ENCODE measurements at regions of chr19 and their contacts with region 1.

Region 1: DNA sequence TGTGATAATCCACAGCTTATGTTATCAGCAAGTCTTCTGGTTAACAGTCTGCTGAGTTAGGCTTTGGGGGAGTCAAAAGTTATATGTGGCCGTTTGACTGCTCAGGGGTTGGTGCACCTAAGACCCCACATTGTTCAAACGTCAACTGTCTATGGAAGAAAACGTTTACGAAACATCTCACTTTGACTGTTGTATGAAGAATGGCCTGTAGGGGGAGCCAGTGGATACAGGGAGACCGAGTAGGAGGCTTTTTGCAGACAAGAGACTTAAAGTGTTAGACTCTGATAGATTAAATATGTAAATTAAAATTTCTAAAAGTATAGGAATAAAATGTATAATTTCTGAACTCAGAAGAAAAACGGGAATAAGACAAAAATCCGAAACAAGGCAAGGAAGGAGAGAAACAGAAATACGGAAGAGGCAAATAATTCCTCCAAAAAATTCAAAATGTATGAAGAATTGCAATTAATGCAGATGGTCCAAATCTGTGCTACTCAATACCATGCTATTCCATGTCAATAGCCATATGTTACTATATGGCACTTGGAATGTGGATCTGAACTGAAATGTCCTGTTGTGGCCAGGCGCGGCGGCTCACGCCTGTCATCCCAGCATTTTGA is 37.8 kb downstream of the TNFSF14 start:
- DNase-seq: peak; percentile 25
- ATAC-seq: peak; percentile 81
- H3K4me3 Mint-ChIP-seq: no peak overlapping the region
- H3K27ac Mint-ChIP-seq: peak overlapping the region; percentile 26
- H3K4me1 Mint-ChIP-seq: peaks cover 29% of the 10 kb centered on the region
- H3K27me3 Mint-ChIP-seq: peaks cover 2% of the 10 kb centered on the region
- CTCF ChIP-seq: peak; percentile 65

Region 2: DNA sequence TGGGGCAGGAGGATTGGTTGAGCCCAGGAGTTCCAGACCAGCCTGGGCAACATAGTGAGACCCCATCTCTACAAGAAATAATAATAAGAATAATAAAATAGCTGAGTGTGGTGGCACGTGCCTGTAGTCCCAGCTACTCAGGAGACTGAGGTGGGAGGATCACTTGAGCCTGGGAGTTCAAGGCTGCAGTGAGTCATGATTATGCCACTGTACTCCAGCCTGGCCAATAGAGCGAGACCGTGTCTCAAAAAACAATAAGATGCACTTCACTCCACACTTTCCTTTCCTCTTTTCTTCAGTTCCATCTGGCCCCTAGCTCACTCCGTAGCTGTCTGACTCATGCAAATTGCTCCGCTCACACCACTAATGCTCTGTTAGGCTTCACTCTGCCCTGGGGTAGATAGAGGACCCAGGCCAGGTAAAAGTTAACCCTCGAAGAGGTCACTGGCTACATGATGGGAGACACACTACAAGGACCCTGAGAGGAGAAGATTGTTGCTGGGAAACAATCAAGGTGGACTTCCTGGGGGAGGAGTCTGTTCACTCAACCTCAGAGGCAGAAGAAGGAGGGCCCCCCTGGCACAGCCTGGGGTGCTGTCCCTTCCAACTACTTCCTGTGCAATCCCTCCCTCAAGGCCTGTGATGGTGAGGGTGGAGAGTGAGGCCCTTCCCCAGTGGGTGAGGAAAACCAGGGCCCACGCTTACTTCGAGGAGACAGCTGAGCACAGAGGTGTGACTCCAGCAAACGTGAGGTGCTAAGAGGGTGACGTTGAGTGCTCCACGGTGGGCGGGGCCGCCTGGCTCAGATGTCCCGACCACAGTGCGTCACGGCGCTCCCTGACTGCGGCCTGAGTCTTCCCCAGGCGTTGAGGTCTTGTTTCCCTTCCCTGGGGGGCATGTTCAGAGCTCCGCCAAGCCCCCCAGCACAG is 110.1 kb before region 1 on chr19:
- CTCF ChIA-PET with region 1: interaction called, 72 read pairs
- POLR2A ChIA-PET with region 1: interaction called, 24 read pairs
- intact Hi-C with region 1: loop called (anchors 1 kb)
- DNase-seq: peak; percentile 70
- ATAC-seq: peak; percentile 73
- H3K4me3 Mint-ChIP-seq: peak overlapping the region; percentile 75
- H3K27ac Mint-ChIP-seq: peak overlapping the region; percentile 99
- H3K4me1 Mint-ChIP-seq: peaks cover 55% of the 10 kb centered on the region
- H3K27me3 Mint-ChIP-seq: no peaks in the 10 kb centered on the region
- CTCF ChIP-seq: no peak

Region 3: GRCh38 chr19:6590827-6591319 is 41.2 kb before region 1 on chr19 and contains the start of gene CD70:
- CTCF ChIA-PET with region 1: interaction called, 6 read pairs
- POLR2A ChIA-PET with region 1: interaction called, 6 read pairs
- intact Hi-C with region 1: loop called (anchors 1 kb)
- DNase-seq: peak; percentile 64
- ATAC-seq: peak; percentile 67
- H3K4me3 Mint-ChIP-seq: peak within 1 kb of the TSS; percentile 88
- H3K27ac Mint-ChIP-seq: peak within 1 kb of the TSS; percentile 82
- H3K4me1 Mint-ChIP-seq: peaks cover 68% of the 10 kb centered on the region
- H3K27me3 Mint-ChIP-seq: peaks cover 17% of the 10 kb centered on the region
- CTCF ChIP-seq: no peak
- total RNA-seq, gene CD70: 29.3 and 29.7 TPM in 2 replicates

Region 4: GRCh38 chr19:6753178-6754031 is 121.3 kb after region 1 on chr19:
- CTCF ChIA-PET with region 1: no interaction called
- POLR2A ChIA-PET with region 1: no interaction called
- intact Hi-C with region 1: loop called (anchors 1 kb)
- DNase-seq: peak; percentile 91
- ATAC-seq: peak; percentile 93
- H3K4me3 Mint-ChIP-seq: peak overlapping the region; percentile 87
- H3K27ac Mint-ChIP-seq: peak overlapping the region; percentile 82
- H3K4me1 Mint-ChIP-seq: peaks cover 33% of the 10 kb centered on the region
- H3K27me3 Mint-ChIP-seq: no peaks in the 10 kb centered on the region
- CTCF ChIP-seq: no peak